Right ventricle myocardium inferior (tissue), 1 donor: ENCODE measurements at regions of chr1 and their contacts with region 1.

Region 1: GRCh38 chr1:84944767-84945486 is 51.9 kb upstream of the LPAR3 start:
- DNase-seq: no peak
- ATAC-seq: peak; percentile 97

Region 2: DNA sequence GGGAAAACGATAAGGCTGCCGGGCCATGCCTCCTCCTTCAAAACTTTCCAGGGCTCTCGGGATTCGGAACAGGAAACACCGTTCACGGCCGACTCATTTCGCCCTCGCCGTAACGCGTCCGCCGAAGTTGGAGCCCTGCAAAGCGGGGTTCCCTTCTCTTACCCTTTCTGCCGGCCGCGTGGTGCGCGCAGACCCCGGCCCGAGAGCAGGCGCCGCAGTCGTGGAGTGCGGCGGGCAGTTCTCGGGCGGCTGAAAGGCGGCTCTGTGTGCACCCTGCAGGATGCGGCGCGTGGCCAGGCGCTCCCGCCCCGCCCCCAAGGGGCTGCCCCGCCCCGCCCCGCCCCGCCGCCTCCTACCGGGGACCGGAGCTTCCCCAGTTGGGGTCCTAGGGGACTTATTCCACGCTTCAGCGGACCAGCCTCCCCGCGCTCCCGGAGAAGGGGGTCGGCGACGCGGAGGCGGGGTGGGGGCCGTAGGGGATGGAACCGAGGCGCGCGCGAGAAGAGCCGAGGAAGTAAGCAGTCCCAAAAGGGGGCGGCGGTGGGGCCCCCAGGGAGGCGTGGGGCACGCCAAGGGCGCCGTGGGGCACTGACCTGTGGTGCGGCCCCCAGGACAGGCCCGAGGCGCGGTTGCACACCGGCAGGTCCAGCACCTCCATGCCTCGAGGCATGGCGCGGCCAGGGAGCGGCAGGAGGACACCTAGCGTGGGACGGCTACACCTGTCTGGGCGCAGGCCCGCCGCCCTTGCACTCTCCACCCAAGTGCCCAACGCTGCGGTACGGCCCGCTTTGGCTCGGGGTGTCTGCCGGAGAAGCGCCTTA is 52.1 kb after region 1 on chr1 and contains the start of gene MCOLN2:
- intact Hi-C with region 1: no loop called
- DNase-seq: peak; percentile 67
- ATAC-seq: peak; percentile 92
- total RNA-seq, gene MCOLN2: 0.19 TPM

Region 3: DNA sequence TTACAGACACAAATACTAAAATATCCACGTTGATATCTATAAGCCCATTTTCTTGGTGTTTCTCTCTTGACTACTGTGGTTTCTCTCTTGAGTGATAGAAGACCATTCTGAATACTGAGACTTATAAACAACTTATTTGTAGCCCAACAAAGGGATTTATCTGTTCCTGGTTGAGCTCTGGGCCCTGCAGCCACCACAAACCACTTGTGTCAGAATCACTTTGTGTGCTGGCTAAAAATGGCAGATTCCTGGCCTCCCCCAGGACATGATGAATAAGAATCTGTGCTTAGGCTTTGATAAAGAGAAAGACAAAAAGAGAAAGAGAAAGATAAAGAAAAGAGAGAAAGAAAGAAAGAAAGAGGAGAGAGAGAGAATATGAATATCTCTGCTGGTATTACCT is 70.9 kb after region 1 on chr1:
- intact Hi-C with region 1: no loop called
- DNase-seq: no peak
- ATAC-seq: no peak

Region 4: DNA sequence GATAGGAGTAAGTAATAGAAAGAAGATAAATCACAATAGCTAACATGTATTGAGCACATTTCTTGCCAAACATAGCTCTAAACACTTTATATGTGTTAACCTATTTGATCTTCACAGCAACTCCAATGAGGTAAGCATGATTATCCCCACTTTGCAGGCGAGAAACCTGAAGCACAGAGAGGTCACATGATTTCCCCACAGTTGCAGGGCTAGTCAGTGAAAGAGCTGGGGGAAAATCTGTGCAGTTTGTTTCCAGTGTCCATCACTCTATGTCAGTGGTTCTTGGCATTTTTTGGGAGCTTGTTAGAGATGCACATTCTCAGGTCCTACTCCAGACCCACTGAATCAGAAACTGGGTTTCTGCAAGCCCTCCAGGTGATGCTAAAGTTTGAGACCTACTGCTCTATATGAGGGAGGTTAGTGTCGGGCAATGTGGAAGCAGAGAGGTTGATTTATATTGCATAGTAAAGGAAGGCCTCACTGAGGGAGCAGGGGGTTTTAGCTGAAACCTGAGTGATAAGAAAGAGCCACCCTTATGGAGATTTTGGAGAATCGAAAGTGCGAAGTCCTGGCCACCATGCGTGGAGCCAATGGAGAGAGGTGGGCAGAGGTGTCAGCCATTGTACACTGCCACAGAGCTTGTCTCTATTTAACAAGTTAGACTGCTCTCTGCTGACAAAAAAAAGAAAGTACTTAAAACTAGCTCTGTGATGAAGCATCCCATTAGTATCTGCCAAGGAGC is 82.5 kb after region 1 on chr1:
- intact Hi-C with region 1: loop called (anchors 1 kb)
- DNase-seq: no peak
- ATAC-seq: peak; percentile 71

Region 5: DNA sequence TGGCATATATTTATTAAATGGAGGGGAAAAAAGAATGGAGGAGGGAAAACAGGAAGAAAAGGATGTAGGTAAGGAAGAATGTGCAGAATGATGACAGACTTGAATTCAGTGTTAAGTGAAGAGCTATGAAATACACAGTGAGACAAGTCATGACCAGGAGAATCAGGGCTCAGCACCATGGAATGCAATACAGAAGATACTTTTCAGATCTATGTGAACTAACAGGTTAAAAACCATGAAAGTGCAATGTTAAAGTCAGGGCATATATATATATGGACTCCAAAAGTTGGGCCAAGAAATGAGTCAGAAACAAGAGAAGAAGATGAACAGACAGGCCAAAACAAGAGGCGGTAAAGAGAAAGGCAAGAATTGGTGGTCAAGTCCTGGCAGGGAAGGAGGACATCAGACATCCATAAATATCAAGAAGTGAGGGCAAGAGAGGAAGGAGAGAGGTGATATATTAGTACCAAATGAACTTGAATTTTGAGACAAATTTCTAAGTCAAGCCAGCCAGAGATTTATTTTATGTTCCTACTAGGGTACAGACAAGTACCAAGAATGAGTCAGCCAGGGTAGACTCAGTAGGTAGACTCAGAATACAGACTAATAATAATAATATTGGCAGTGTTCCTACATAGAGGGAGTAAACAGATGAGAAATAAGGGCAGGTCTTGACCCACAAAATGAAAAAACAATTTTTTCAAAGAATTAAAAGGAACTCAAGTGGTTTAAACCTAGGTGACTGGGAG is 142.9 kb after region 1 on chr1:
- intact Hi-C with region 1: loop called (anchors 10 kb)
- DNase-seq: no peak
- ATAC-seq: no peak

Region 6: DNA sequence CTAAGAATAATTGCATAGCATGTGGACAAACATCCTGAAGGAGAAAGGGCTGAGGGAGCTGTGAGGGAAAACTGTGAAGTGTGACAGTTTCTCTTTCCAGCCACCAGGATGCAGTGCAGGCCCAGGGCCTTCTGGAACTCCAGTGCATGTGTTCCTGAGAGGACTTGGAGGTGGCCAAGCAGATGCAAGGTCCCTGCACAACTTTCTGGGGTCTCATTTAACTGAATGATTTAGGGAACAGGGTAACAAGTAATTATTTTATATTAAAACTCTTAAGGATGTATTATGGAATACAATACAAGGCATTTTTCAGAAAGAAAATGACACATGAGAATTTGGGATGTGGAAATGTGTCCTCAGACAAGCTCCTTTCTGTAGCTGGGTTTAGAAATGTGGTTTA is 164.5 kb after region 1 on chr1:
- intact Hi-C with region 1: loop called (anchors 1 kb)
- DNase-seq: no peak
- ATAC-seq: peak; percentile 80

Region 7: DNA sequence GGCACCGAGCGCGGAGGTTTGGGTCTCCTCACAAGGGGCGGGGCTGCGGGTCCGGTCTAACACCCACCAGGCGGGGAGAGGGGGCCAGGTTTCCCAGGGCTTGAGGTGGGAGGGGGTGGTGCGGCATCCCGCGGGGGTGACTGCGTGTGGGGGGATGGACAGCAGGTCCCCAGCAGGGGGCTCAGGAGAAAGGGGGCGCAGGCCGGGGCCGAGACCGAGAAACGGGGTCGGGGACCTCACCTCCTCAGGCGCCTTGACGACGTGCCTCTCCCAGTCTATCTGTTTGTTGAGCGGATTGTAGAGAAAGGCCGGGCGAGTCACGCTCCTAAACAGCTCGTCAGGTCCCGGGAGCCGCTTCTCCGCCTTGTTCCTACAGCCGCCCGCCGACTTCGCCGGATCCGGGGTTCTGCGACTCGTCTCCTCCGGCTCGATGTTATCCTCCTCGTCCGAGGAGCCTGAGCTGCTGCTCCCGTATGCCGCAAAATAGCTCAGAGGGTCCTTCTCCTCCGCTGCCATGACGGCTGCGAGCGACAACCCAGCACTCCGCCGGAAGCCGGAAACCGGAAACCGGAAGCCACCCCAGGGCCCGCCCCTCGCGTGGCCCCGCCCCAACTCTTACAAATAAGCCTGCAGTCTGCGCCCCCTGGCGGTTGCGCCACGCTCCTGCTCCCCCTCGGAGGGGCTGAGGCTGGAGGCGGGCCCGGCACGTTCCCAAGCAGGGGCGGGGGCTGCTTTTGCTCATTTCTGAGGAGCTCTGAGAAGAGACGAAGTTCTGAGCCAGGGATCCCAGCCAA is 314.4 kb after region 1 on chr1 and contains the start of gene C1orf52:
- intact Hi-C with region 1: loop called (anchors 2 kb)
- DNase-seq: peak; percentile 98
- ATAC-seq: peak; percentile 98
- total RNA-seq, gene C1orf52: 17.1 TPM